Right cardiac atrium (tissue), 5 donors: ENCODE measurements at regions of chrX and their contacts with region 1.

Region 1: GRCh38 chrX:14029425-14030173 is at the start of gene GEMIN8:
- DNase-seq: peak; percentile 92 to 96 (median 95)
- ATAC-seq: peak; percentile 99
- H3K4me3 ChIP-seq: peak within 1 kb of the TSS; percentile 85
- H3K27ac ChIP-seq: peak within 1 kb of the TSS; percentile 89
- H3K4me1 ChIP-seq: peaks cover 4% of the 10 kb centered on the region
- H3K27me3 ChIP-seq: no peaks in the 10 kb centered on the region
- total RNA-seq, gene GEMIN8: 8.0 to 9.6 (median 8.9) TPM

Region 2: DNA sequence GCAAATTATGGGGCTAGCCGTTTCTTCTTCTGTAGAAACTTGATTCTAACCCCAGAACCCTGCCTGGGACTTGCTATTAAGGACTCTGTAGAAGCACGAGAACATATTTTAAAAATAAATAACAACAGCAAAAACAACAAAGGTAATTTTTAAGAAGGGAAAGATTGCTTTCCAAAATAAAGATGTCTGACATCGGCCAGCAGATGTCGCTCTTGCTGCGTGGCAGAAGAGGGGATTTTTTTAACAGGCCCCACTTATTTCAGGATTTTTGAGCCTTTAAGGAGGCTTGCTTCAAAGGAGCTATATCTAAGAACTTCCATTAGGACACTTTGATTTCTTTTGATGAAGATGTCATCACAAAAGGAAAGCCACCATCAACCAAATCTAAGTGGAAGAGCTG is 523.0 kb before region 1 on chrX:
- intact Hi-C with region 1: loop called (anchors 5 to 10 kb)
- DNase-seq: peak; percentile 44 to 65 (median 47)
- ATAC-seq: no peak
- H3K4me3 ChIP-seq: no peak overlapping the region
- H3K27ac ChIP-seq: no peak overlapping the region
- H3K4me1 ChIP-seq: no peaks in the 10 kb centered on the region
- H3K27me3 ChIP-seq: no peaks in the 10 kb centered on the region

Region 3: GRCh38 chrX:13653022-13653693 is 376.4 kb before region 1 on chrX and contains the start of gene TCEANC:
- intact Hi-C with region 1: loop called (anchors 5 to 10 kb)
- DNase-seq: peak; percentile 97 to 99 (median 98)
- ATAC-seq: peak; percentile 100
- H3K4me3 ChIP-seq: peak within 1 kb of the TSS; percentile 52
- H3K27ac ChIP-seq: peak within 1 kb of the TSS; percentile 96
- H3K4me1 ChIP-seq: no peaks in the 10 kb centered on the region
- H3K27me3 ChIP-seq: no peaks in the 10 kb centered on the region
- total RNA-seq, gene TCEANC: 4.0 to 6.7 (median 4.5) TPM

Region 4: DNA sequence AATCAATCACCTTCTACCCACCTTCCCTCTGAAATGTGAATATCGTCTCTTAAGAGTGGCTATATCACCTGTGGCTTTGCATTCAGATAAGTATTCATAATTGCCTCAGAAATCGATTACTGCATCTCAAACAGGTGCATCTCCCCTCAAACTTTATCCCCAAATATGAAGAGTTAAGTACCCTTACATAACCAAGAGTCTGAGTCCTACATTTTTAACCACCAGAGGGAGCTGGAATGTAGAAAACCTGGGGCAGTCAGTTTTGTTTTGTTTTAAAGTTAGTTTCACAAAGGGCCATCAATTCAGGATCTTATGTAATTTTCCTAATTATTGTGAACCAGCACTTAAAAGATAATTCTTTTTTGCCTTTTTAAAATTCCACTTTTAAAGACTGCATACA is 371.0 kb before region 1 on chrX:
- intact Hi-C with region 1: loop called (anchors 5 to 10 kb)
- DNase-seq: no peak
- ATAC-seq: no peak
- H3K4me3 ChIP-seq: no peak overlapping the region
- H3K27ac ChIP-seq: no peak overlapping the region
- H3K4me1 ChIP-seq: no peaks in the 10 kb centered on the region
- H3K27me3 ChIP-seq: no peaks in the 10 kb centered on the region

Region 5: DNA sequence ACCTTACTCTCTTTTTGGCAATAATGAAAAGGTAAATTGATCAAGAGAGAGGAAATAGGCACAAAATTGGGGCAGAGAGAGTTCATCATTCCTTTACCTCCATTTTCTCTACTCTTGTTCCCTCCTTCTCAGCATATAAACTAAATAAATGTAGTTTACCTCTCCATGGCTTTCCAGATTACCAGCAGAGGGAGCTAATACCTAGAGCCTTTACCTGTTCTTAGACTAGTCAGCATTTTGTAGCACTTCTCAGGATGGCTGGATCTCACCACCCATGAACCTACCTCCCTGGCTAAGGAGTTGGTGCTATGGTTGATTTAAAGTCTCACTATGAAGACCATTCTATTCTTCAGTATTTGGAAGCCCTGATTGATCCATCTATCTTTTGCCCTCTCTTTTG is 279.4 kb before region 1 on chrX:
- intact Hi-C with region 1: loop called in 1 of 4 experiments (anchors 10 kb)
- DNase-seq: no peak
- ATAC-seq: peak in 1 of 2 donors; percentile 41
- H3K4me3 ChIP-seq: no peak overlapping the region
- H3K27ac ChIP-seq: no peak overlapping the region
- H3K4me1 ChIP-seq: no peaks in the 10 kb centered on the region
- H3K27me3 ChIP-seq: no peaks in the 10 kb centered on the region

Region 6: DNA sequence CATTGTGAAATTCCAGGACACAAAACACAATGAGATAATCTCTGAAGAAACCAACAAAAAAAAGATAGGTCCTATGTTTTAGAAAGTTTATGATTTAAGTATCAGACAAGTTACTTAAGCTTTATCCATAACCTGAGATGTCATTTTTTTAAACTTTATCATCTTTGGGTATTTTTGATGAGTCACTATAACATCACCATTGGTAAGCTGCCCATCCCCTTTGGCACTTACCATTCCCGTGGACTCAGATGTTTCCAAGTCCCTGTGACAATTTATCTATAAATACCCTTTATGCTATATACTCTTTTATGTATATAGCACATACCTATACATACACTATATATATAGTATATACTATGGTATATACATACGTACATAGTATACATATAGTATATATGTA is 199.0 kb after region 1 on chrX:
- intact Hi-C with region 1: no loop called
- DNase-seq: no peak
- ATAC-seq: no peak
- H3K4me3 ChIP-seq: no peak overlapping the region
- H3K27ac ChIP-seq: no peak overlapping the region
- H3K4me1 ChIP-seq: no peaks in the 10 kb centered on the region
- H3K27me3 ChIP-seq: no peaks in the 10 kb centered on the region